SK-N-SH (cell line): ENCODE measurements at regions of chr14 and their contacts with region 1.

Region 1: GRCh38 chr14:61694830-61695694 is at the start of gene HIF1A:
- DNase-seq: peak; percentile 97
- H3K4me3 ChIP-seq: peak within 1 kb of the TSS; percentile 78 to 92
- H3K27ac ChIP-seq: peak within 1 kb of the TSS; percentile 92 to 98
- H3K4me1 ChIP-seq: peaks cover 6 to 8% of the 10 kb centered on the region in 2 experiments; a peak in 3 of 4 replicates
- H3K27me3 ChIP-seq: no peaks in the 10 kb centered on the region
- CTCF ChIP-seq: no peak
- EP300 ChIP-seq: peak; percentile 16 to 28; a peak in 2 of 4 replicates
- RAD21 ChIP-seq: no peak; the same call in 1 of the 2 replicates
- polyA plus RNA-seq, gene HIF1A: 18.9 and 20.8 TPM in 2 replicates

Region 2: GRCh38 chr14:61609191-61609843 is 85.7 kb before region 1 on chr14:
- CTCF ChIA-PET with region 1: interaction called, 7 read pairs
- POLR2A ChIA-PET with region 1: interaction called, 24 read pairs
- DNase-seq: peak; percentile 50
- H3K4me3 ChIP-seq: no peak overlapping the region; a peak in 1 of 4 replicates
- H3K27ac ChIP-seq: peak overlapping the region; percentile 89 to 99
- H3K4me1 ChIP-seq: peaks cover 16 to 47% of the 10 kb centered on the region in 2 experiments
- H3K27me3 ChIP-seq: no peaks in the 10 kb centered on the region
- CTCF ChIP-seq: no peak
- EP300 ChIP-seq: peak in 1 of 2 experiments; percentile 79; a peak in 2 of 4 replicates
- RAD21 ChIP-seq: peak; percentile 27; the same call in 1 of the 2 replicates

Region 3: GRCh38 chr14:61780125-61780524 is 85.1 kb after region 1 on chr14:
- CTCF ChIA-PET with region 1: no interaction called
- POLR2A ChIA-PET with region 1: no interaction called
- DNase-seq: no peak
- H3K4me3 ChIP-seq: no peak overlapping the region
- H3K27ac ChIP-seq: no peak overlapping the region
- H3K4me1 ChIP-seq: no peaks in the 10 kb centered on the region
- H3K27me3 ChIP-seq: no peaks in the 10 kb centered on the region
- CTCF ChIP-seq: no peak
- EP300 ChIP-seq: no peak
- RAD21 ChIP-seq: no peak